ENCODE measurements at regions of chr3 and their contacts with region 1.

Region 1: GRCh38 chr3:100254168-100254777 is 6.5 kb upstream of the TBC1D23 start:
- DNase-seq: peak; percentile 52 to 61
- H3K4me3 ChIP-seq: no peak overlapping the region
- H3K27ac ChIP-seq: no peak overlapping the region
- H3K4me1 ChIP-seq: peaks cover 0 to 8% of the 10 kb centered on the region in 2 donors
- H3K27me3 ChIP-seq: no peaks in the 10 kb centered on the region
- CTCF ChIP-seq: peak; percentile 32 to 88 (median 78)
- POLR2A ChIP-seq: no peak

Region 2: GRCh38 chr3:99833617-99834205 is 420.6 kb before region 1 on chr3:
- intact Hi-C with region 1: loop called (anchors 10 kb)
- DNase-seq: no peak
- H3K4me3 ChIP-seq: no peak overlapping the region
- H3K27ac ChIP-seq: no peak overlapping the region
- H3K4me1 ChIP-seq: peaks cover 4 to 12% of the 10 kb centered on the region in 2 donors
- H3K27me3 ChIP-seq: no peaks in the 10 kb centered on the region
- CTCF ChIP-seq: no peak
- POLR2A ChIP-seq: no peak

Region 3: GRCh38 chr3:100068826-100069225 is 185.4 kb before region 1 on chr3:
- intact Hi-C with region 1: loop called (anchors 5 kb)
- DNase-seq: peak; percentile 92 to 95
- H3K4me3 ChIP-seq: no peak overlapping the region
- H3K27ac ChIP-seq: peak overlapping the region; percentile 54 to 69 (median 67)
- H3K4me1 ChIP-seq: peaks cover 0 to 12% of the 10 kb centered on the region in 2 donors
- H3K27me3 ChIP-seq: no peaks in the 10 kb centered on the region
- CTCF ChIP-seq: peak; percentile 33 to 92 (median 86)
- POLR2A ChIP-seq: peak in 1 of 2 donors; percentile 38

Measured in thyroid gland (tissue), 4 donors.